ENCODE measurements at regions of chr6 and their contacts with region 1.

Region 1: GRCh38 chr6:16776394-16777017 is 15.2 kb upstream of the ATXN1 start:
- DNase-seq: no peak
- H3K4me3 ChIP-seq: no peak overlapping the region
- H3K27ac ChIP-seq: no peak overlapping the region
- H3K4me1 ChIP-seq: no peaks in the 10 kb centered on the region
- H3K27me3 ChIP-seq: no peaks in the 10 kb centered on the region
- CTCF ChIP-seq: peak in 1 of 5 experiments; percentile 3
- EP300 ChIP-seq: no peak
- POLR2A ChIP-seq: no peak

Region 2: DNA sequence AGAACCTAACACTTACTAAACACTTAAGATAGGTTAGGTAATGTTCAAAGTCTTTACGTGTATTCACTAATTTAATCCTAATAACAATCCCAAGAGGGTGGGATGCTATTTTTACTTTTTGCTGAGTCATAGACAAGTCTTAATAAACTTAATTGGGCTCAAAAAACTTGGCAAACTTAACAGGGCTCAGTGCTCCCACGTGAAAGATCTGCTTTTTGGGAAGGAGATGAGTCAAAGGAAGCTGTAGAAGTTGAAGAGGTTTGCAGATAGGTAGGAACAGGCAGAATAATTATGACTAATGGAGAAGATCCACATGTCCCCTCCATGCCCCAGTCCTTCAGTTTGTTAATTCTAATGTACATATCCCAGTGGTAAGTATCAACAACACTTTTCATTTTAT is 280.8 kb after region 1 on chr6:
- in situ Hi-C with region 1: loop called in 1 of 4 experiments (anchors 25 kb)
- intact Hi-C with region 1: no loop called
- DNase-seq: no peak
- H3K4me3 ChIP-seq: no peak overlapping the region
- H3K27ac ChIP-seq: no peak overlapping the region
- H3K4me1 ChIP-seq: no peaks in the 10 kb centered on the region
- H3K27me3 ChIP-seq: no peaks in the 10 kb centered on the region
- CTCF ChIP-seq: no peak
- EP300 ChIP-seq: no peak
- POLR2A ChIP-seq: no peak